Heart right ventricle (tissue), 16 donors: ENCODE measurements at regions of chr16 and their contacts with region 1.

Region 1: DNA sequence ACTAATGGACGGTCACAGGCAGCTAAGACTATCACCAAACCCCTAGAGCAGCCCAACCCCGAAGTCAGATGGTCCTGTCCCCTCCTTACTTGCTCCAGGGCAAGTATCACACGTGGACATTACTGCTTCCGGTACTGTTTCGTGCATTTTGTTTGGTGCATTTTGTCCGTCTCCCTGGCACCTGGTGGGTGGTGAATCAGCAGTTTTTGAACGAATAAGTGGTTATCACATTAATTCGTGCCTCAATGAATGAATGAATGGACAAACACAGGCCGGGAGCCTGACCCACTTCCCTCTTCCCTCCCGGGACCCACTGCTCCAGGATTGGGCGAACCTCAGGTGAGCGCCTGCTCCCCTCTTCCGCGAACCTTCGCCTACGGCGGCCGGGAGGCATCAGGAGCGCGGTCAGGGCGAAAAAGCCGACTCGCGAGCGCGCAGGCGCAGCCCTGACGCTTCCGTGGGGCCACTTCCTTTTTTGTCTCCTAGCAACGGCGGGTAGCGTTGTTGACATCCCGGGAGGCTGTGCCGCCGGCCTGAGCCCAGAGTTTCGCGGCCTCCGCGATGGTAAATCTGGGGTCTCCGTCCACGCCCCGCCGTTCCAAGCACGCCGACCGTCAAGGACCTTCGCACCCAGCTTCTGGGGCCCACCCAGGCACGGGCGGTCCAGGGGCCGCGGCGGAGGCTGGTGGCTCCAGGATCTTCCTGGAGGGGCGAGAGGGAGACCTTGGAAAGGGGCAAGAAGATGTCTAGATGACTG is at the start of gene DYNLRB2:
- DNase-seq: peak; percentile 94
- ATAC-seq: peak; percentile 97 to 100 (median 98)
- H3K4me3 ChIP-seq: peak within 1 kb of the TSS; percentile 48 to 76 (median 68)
- H3K27ac ChIP-seq: peak within 1 kb of the TSS in 8 of 10 donors; percentile 21 to 85 (median 40)
- H3K4me1 ChIP-seq: peaks cover 0 to 15% (median 5%) of the 10 kb centered on the region in 9 donors
- H3K27me3 ChIP-seq: peaks cover 0 to 29% (median 11%) of the 10 kb centered on the region in 7 donors
- CTCF ChIP-seq: no peak
- total RNA-seq, gene DYNLRB2: 0.69 to 0.77 (median 0.71) TPM in 3 of 10 donors, not detected in the others

Region 2: GRCh38 chr16:80417706-80418271 is 122.9 kb before region 1 on chr16:
- intact Hi-C with region 1: no loop called
- DNase-seq: no peak
- ATAC-seq: no peak
- H3K4me3 ChIP-seq: no peak overlapping the region
- H3K27ac ChIP-seq: no peak overlapping the region
- H3K4me1 ChIP-seq: no peaks in the 10 kb centered on the region
- H3K27me3 ChIP-seq: no peaks in the 10 kb centered on the region
- CTCF ChIP-seq: no peak

Region 3: GRCh38 chr16:80718249-80719220 is 177.8 kb after region 1 on chr16:
- intact Hi-C with region 1: no loop called
- DNase-seq: no peak
- ATAC-seq: peak in 2 of 8 donors; percentile 26 to 27
- H3K4me3 ChIP-seq: no peak overlapping the region
- H3K27ac ChIP-seq: no peak overlapping the region
- H3K4me1 ChIP-seq: peaks cover 0 to 11% (median 0%) of the 10 kb centered on the region in 9 donors
- H3K27me3 ChIP-seq: no peaks in the 10 kb centered on the region
- CTCF ChIP-seq: no peak

Region 4: GRCh38 chr16:80804056-80804450 is 263.4 kb after region 1 on chr16:
- intact Hi-C with region 1: loop called in 2 of 10 experiments (anchors 10 kb)
- DNase-seq: peak; percentile 34 to 59
- ATAC-seq: peak in 5 of 8 donors; percentile 28 to 65 (median 41)
- H3K4me3 ChIP-seq: peak overlapping the region in 9 of 10 donors; percentile 42 to 68 (median 61)
- H3K27ac ChIP-seq: peak overlapping the region in 1 of 10 donors; percentile 64
- H3K4me1 ChIP-seq: peaks cover 0 to 20% (median 0%) of the 10 kb centered on the region in 9 donors
- H3K27me3 ChIP-seq: peaks cover 0 to 3% (median 0%) of the 10 kb centered on the region in 7 donors
- CTCF ChIP-seq: no peak